A673 (cell line): ENCODE measurements at regions of chr20 and their contacts with region 1.

Region 1: DNA sequence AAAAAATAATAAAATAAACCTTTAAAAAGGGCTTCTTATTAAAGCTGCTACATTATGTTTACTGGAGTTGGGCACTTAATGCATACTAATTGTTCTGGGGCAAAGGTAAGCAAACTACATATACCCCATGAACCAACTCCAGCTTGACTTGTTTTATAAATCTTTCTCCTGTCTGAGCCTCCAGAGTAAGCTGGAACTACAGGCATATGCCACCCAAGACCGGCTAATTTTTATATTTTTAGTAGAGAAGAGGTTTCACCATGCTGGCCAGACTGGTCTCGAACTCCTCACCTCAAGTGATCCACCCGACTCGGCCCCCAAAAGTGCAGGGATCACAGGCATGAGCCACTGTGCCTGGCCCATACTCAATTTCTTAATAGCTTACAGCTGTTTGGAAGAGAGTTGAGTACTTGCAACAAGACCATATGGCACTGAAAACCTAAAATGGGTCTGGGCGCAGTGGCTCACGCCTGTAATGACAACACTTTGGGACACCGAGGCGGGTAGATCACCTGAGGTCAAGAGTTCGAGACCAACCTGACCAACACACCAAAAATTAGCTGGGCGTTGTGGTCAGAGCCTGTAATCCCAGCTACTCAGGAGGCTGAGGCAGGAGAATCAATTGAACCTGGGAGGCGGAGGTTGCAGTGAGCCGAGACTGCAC is 19.9 kb downstream of the ROMO1 start:
- DNase-seq: no peak
- H3K4me3 ChIP-seq: no peak overlapping the region
- H3K27ac ChIP-seq: no peak overlapping the region
- H3K4me1 ChIP-seq: no peaks in the 10 kb centered on the region
- H3K27me3 ChIP-seq: no peaks in the 10 kb centered on the region
- CTCF ChIP-seq: no peak

Region 2: GRCh38 chr20:35240083-35240812 is 478.9 kb before region 1 on chr20:
- CTCF ChIA-PET with region 1: no interaction called
- POLR2A ChIA-PET with region 1: no interaction called
- intact Hi-C with region 1: no loop called
- DNase-seq: no peak
- H3K4me3 ChIP-seq: no peak overlapping the region
- H3K27ac ChIP-seq: no peak overlapping the region
- H3K4me1 ChIP-seq: no peaks in the 10 kb centered on the region
- H3K27me3 ChIP-seq: no peaks in the 10 kb centered on the region
- CTCF ChIP-seq: no peak

Region 3: GRCh38 chr20:35730583-35731468 is 11.7 kb after region 1 on chr20:
- CTCF ChIA-PET with region 1: no interaction called
- POLR2A ChIA-PET with region 1: no interaction called
- intact Hi-C with region 1: loop called (anchors 1 kb)
- DNase-seq: no peak
- H3K4me3 ChIP-seq: no peak overlapping the region
- H3K27ac ChIP-seq: no peak overlapping the region
- H3K4me1 ChIP-seq: peaks cover 19% of the 10 kb centered on the region
- H3K27me3 ChIP-seq: no peaks in the 10 kb centered on the region
- CTCF ChIP-seq: no peak